ENCODE measurements at regions of chr1 and their contacts with region 1.

Region 1: GRCh38 chr1:173429471-173430402 is 47.4 kb upstream of the PRDX6 start:
- DNase-seq: peak; percentile 82
- ATAC-seq: peak; percentile 89
- H3K4me3 ChIP-seq: peak overlapping the region; percentile 20 to 50 (median 31)
- H3K4me3 Mint-ChIP-seq: peak overlapping the region; percentile 74
- H3K27ac ChIP-seq: peak overlapping the region; percentile 43 to 63
- H3K27ac Mint-ChIP-seq: peak overlapping the region; percentile 84
- H3K4me1 ChIP-seq: peaks cover 20 to 23% of the 10 kb centered on the region in 2 donors
- H3K4me1 Mint-ChIP-seq: peaks cover 24% of the 10 kb centered on the region
- H3K27me3 ChIP-seq: no peaks in the 10 kb centered on the region
- H3K27me3 Mint-ChIP-seq: no peaks in the 10 kb centered on the region
- CTCF ChIP-seq: peak; percentile 78

Region 2: GRCh38 chr1:172826096-172826743 is 603.5 kb before region 1 on chr1:
- CTCF ChIA-PET with region 1: interaction called, 22 read pairs
- POLR2A ChIA-PET with region 1: no interaction called
- intact Hi-C with region 1: no loop called
- DNase-seq: peak; percentile 43
- ATAC-seq: peak; percentile 62
- H3K4me3 ChIP-seq: peak overlapping the region in 1 of 5 experiments; percentile 13
- H3K4me3 Mint-ChIP-seq: no peak overlapping the region
- H3K27ac ChIP-seq: no peak overlapping the region
- H3K27ac Mint-ChIP-seq: no peak overlapping the region
- H3K4me1 ChIP-seq: peaks cover 9% of the 10 kb centered on the region in 2 donors
- H3K4me1 Mint-ChIP-seq: no peaks in the 10 kb centered on the region
- H3K27me3 ChIP-seq: no peaks in the 10 kb centered on the region
- H3K27me3 Mint-ChIP-seq: no peaks in the 10 kb centered on the region
- CTCF ChIP-seq: peak; percentile 63

Region 3: GRCh38 chr1:173476664-173477285 is 47.0 kb after region 1 on chr1:
- CTCF ChIA-PET with region 1: interaction called, 46 read pairs
- POLR2A ChIA-PET with region 1: interaction called, 4 read pairs
- intact Hi-C with region 1: loop called (anchors 1 kb)
- DNase-seq: peak; percentile 92
- ATAC-seq: peak; percentile 92
- H3K4me3 ChIP-seq: peak overlapping the region; percentile 48 to 96 (median 87)
- H3K4me3 Mint-ChIP-seq: peak overlapping the region; percentile 99
- H3K27ac ChIP-seq: peak overlapping the region; percentile 42 to 82
- H3K27ac Mint-ChIP-seq: peak overlapping the region; percentile 99
- H3K4me1 ChIP-seq: peaks cover 22 to 23% of the 10 kb centered on the region in 2 donors
- H3K4me1 Mint-ChIP-seq: peaks cover 42% of the 10 kb centered on the region
- H3K27me3 ChIP-seq: no peaks in the 10 kb centered on the region
- H3K27me3 Mint-ChIP-seq: no peaks in the 10 kb centered on the region
- CTCF ChIP-seq: no peak

Region 4: DNA sequence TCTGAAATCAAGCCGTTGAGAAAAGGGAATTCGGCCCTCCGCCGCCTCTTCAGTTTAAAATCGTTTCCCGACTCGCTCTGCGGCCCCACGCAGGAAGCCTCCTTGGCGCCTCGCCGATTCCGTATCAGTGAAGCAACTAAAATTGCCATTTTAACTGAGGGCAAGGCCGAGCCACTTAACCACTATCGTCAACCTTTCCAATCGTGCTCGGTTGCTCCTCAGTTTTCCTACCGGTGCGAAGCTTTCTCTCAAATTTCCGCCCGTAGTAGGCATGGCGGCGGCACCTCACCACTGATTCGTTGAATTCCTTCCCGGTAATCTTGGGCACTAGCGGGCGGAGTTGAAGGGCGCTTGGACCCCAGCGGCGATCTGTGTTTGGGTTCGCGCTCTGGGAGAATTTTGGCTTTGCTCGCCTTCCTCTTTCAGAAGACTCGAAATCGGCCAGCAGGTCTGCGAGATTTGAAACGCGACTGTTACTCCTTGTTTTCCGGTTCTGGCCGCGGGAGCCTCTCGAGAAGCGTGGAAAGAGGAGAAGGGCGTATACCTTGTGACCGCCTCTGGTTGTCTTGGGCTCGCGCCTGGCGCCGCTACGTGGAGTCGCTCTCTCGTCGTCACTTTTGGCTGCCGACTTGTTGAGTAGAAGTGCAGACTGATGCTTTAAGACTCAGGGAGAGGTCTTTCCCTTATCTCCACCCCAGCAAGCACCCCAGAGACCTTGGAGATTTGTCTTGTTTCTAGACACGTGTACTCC is 394.8 kb after region 1 on chr1 and contains the starts of genes CENPL and DARS2:
- CTCF ChIA-PET with region 1: interaction called, 62 read pairs
- POLR2A ChIA-PET with region 1: interaction called, 3 read pairs
- intact Hi-C with region 1: loop called (anchors 1 kb)
- DNase-seq: peak; percentile 94
- ATAC-seq: peak; percentile 89
- H3K4me3 ChIP-seq: peak within 1 kb of the TSS; percentile 78 to 100 (median 93)
- H3K4me3 Mint-ChIP-seq: peak within 1 kb of the TSS; percentile 92
- H3K27ac ChIP-seq: peak within 1 kb of the TSS; percentile 77 to 87
- H3K27ac Mint-ChIP-seq: peak within 1 kb of the TSS; percentile 95
- H3K4me1 ChIP-seq: peaks cover 8 to 18% of the 10 kb centered on the region in 2 donors
- H3K4me1 Mint-ChIP-seq: peaks cover 21% of the 10 kb centered on the region
- H3K27me3 ChIP-seq: no peaks in the 10 kb centered on the region
- H3K27me3 Mint-ChIP-seq: no peaks in the 10 kb centered on the region
- CTCF ChIP-seq: no peak
- total RNA-seq, gene CENPL: 9.7 and 14.4 TPM in 2 replicates
- total RNA-seq, gene DARS2: 17.0 and 17.3 TPM in 2 replicates

Region 5: GRCh38 chr1:174022080-174022975 is 592.6 kb after region 1 on chr1 and contains the start of gene RC3H1:
- CTCF ChIA-PET with region 1: no interaction called
- POLR2A ChIA-PET with region 1: interaction called, 3 read pairs
- intact Hi-C with region 1: loop called (anchors 5 kb)
- DNase-seq: peak; percentile 93
- ATAC-seq: peak; percentile 95
- H3K4me3 ChIP-seq: peak within 1 kb of the TSS; percentile 73 to 94 (median 91)
- H3K4me3 Mint-ChIP-seq: peak within 1 kb of the TSS; percentile 95
- H3K27ac ChIP-seq: peak within 1 kb of the TSS; percentile 76 to 93
- H3K27ac Mint-ChIP-seq: peak within 1 kb of the TSS; percentile 96
- H3K4me1 ChIP-seq: peaks cover 30 to 36% of the 10 kb centered on the region in 2 donors
- H3K4me1 Mint-ChIP-seq: peaks cover 41% of the 10 kb centered on the region
- H3K27me3 ChIP-seq: no peaks in the 10 kb centered on the region
- H3K27me3 Mint-ChIP-seq: no peaks in the 10 kb centered on the region
- CTCF ChIP-seq: no peak
- total RNA-seq, gene RC3H1: 84.4 and 84.5 TPM in 2 replicates